ENCODE measurements at regions of chr15 and their contacts with region 1.

Region 1: DNA sequence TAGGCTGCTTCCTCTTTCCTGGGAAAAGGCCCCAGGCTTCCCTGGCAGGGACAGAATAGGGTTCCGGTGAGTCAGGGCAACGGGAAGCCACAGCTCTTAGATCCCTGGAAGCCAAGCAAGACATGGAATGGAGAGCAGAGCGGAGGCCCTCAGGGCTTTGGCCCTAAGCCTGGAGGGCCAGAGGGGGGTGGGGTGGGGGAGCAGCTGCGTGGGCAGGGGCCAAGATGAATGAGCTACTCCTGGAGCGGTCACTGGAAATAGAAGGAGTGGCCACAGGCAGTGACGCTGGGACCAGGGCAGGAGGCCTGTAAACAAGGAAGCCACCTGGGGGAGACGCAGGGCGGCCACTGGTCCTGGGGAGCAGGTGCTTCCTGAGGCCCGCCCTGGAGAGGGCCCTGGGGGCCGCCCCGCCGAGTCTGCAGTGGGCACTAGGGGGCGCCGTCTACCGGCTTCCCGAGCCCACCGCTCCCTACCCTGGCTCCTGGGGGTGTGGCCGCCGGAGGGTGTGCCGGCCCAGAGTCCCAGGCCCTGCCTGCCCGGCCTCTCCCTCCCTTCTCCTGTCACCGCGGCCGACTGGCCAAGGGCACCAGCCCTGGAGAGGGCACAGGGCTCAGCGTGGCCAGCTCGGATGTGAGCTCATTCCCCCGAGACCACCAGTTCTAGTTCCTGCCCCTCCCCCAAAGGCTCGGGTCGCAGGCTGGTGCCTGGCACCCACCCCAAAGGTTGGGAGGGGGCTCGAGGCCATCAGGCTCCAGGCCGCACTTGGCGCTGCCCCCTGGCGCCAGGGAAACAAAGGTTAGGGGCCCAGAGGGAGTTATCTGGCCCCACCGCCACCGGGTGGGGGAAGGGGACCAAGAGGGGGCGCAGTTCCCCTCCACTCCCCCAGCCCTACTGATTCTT is 12.1 kb downstream of the VPS18 start:
- DNase-seq: peak; percentile 36
- H3K4me3 ChIP-seq: peak overlapping the region in 1 of 3 experiments; percentile 46
- H3K27ac ChIP-seq: no peak overlapping the region
- H3K4me1 ChIP-seq: peaks cover 28% of the 10 kb centered on the region
- H3K27me3 ChIP-seq: no peaks in the 10 kb centered on the region
- CTCF ChIP-seq: peak; percentile 48 to 73 (median 64)

Region 2: DNA sequence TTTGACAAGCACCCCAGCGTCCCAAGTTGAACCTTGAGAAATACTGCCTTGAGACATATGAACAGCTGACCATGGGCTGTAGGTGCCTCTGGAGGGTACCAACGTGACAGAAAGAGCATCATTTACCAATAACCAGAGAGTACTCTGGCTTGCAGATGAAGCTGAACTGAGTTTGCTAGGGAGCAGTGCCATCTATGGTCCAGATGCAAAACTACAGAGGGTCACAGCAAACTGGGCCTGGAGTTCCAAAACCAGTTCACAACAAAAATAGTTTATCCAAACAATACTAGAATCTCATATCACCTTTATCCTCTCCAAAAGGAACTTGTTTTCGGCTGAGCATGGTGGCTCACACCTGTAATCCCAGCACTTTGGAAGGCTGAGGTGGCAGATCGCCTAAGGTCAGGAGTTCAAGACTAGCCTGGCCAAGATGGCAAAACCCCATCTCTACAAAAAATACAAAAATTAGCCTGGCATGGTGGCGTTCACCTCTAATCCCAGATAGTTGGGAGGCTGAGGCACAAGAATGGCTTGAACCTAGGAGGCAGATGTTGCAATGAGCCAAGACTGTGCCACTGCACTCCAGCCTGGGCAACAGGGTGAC is 116.2 kb after region 1 on chr15:
- dilution Hi-C with region 1: loop called (anchors 25 kb)
- DNase-seq: no peak
- H3K4me3 ChIP-seq: no peak overlapping the region
- H3K27ac ChIP-seq: no peak overlapping the region
- H3K4me1 ChIP-seq: no peaks in the 10 kb centered on the region
- H3K27me3 ChIP-seq: no peaks in the 10 kb centered on the region
- CTCF ChIP-seq: peak; percentile 67 to 74 (median 67)